Right cardiac atrium (tissue), 5 donors: ENCODE measurements at regions of chr10 and their contacts with region 1.

Region 1: GRCh38 chr10:90862908-90863514 is 5.2 kb upstream of the HTR7 start:
- DNase-seq: no peak
- ATAC-seq: no peak
- H3K4me3 ChIP-seq: no peak overlapping the region
- H3K27ac ChIP-seq: no peak overlapping the region
- H3K4me1 ChIP-seq: no peaks in the 10 kb centered on the region
- H3K27me3 ChIP-seq: no peaks in the 10 kb centered on the region

Region 2: GRCh38 chr10:90751107-90751997 is 111.7 kb before region 1 on chr10:
- intact Hi-C with region 1: loop called in 3 of 4 experiments (anchors 5 to 10 kb)
- DNase-seq: no peak
- ATAC-seq: peak in 1 of 2 donors; percentile 53
- H3K4me3 ChIP-seq: no peak overlapping the region
- H3K27ac ChIP-seq: no peak overlapping the region
- H3K4me1 ChIP-seq: no peaks in the 10 kb centered on the region
- H3K27me3 ChIP-seq: no peaks in the 10 kb centered on the region